Activated CD4-positive, alpha-beta memory T cell treated with anti-CD3 and anti-CD28 coated beads for 36 hours (primary cell): ENCODE measurements at regions of chr12 and their contacts with region 1.

Region 1: DNA sequence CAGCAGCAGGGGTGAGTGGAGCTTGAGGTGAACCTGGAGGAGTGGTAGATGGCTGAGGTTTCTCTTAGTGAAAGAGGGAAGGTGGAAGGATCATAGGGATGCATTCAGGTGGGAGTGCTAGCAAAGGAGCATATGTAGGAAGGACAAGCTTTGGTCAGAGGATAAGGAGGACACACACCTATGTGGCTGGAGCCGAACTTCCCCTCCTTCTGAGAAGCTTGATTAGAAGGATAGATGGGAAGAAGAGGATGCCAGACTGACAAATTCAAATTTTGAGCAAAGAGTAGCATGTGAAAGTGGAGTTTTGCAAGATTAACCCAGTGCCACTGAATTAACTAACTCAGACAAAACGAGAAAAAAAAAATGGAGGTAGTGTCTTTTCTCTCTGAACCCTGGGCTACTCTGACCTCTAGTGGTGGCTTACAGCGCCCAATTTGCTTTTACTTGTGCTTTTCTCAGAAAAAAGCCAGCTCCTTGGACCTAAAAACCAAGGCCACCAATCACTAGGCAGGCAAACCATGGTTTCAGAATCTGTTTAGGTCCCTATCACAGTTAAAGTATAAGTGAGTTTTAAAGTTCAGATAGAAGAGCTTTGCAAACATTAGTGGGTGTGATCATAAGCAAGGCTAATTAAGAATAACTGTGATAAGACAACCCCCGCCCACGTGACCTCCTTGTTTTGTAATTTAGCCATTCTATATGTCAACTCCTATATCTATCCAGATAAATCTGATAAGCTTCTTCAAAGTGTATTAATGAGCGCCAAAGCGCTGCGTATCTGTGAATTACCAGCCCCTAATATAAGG is 15.5 kb downstream of the EMP1 start:
- DNase-seq: peak; percentile 81
- H3K4me3 Mint-ChIP-seq: peak overlapping the region; percentile 53
- H3K27ac Mint-ChIP-seq: peak overlapping the region; percentile 93
- H3K4me1 Mint-ChIP-seq: peaks cover 54% of the 10 kb centered on the region
- H3K27me3 Mint-ChIP-seq: no peaks in the 10 kb centered on the region

Region 2: GRCh38 chr12:12803186-12803585 is 408.9 kb before region 1 on chr12:
- CTCF ChIA-PET with region 1: interaction called, 6 read pairs
- POLR2A ChIA-PET with region 1: no interaction called
- intact Hi-C with region 1: loop called (anchors 1 kb)
- DNase-seq: peak; percentile 61
- H3K4me3 Mint-ChIP-seq: no peak overlapping the region
- H3K27ac Mint-ChIP-seq: peak overlapping the region; percentile 50
- H3K4me1 Mint-ChIP-seq: peaks cover 46% of the 10 kb centered on the region
- H3K27me3 Mint-ChIP-seq: no peaks in the 10 kb centered on the region

Region 3: GRCh38 chr12:12819671-12820311 is 392.3 kb before region 1 on chr12:
- CTCF ChIA-PET with region 1: no interaction called
- POLR2A ChIA-PET with region 1: no interaction called
- intact Hi-C with region 1: no loop called
- DNase-seq: no peak
- H3K4me3 Mint-ChIP-seq: no peak overlapping the region
- H3K27ac Mint-ChIP-seq: peak overlapping the region; percentile 44
- H3K4me1 Mint-ChIP-seq: peaks cover 56% of the 10 kb centered on the region
- H3K27me3 Mint-ChIP-seq: no peaks in the 10 kb centered on the region

Region 4: DNA sequence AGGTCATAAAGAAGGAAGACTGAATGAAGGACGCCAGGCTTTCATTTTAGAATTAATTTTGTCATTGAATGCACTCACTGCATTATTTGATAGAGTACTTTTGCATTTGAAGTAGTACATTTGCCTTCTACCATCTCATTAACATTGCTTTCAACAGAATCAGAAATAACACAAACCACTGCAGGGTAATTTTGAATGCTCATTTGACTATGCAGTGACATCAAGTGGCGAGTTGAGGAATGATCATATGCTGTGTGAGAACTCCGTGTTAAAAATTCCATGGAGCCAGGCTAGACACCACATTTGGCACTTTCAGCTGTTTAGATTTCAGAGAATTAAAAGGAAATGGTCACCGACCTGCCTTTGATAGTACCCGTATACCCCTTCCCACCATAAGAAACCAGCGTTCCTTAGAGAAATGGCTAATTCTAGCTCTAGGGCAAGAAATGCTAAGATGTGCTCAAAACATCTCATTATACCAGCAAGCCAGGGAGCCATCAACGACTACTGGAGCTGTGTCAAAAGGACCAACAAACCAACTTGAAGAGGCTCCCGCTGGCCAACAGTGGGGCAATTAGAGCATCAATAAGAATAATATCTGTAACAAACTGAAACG is 228.5 kb before region 1 on chr12:
- CTCF ChIA-PET with region 1: interaction called, 26 read pairs
- POLR2A ChIA-PET with region 1: no interaction called
- intact Hi-C with region 1: loop called (anchors 2 kb)
- DNase-seq: no peak
- H3K4me3 Mint-ChIP-seq: no peak overlapping the region
- H3K27ac Mint-ChIP-seq: no peak overlapping the region
- H3K4me1 Mint-ChIP-seq: peaks cover 2% of the 10 kb centered on the region
- H3K27me3 Mint-ChIP-seq: no peaks in the 10 kb centered on the region

Region 5: GRCh38 chr12:13100882-13101769 is 110.9 kb before region 1 on chr12:
- CTCF ChIA-PET with region 1: interaction called, 173 read pairs
- POLR2A ChIA-PET with region 1: interaction called, 27 read pairs
- intact Hi-C with region 1: loop called (anchors 1 kb)
- DNase-seq: peak; percentile 93
- H3K4me3 Mint-ChIP-seq: peak overlapping the region; percentile 61
- H3K27ac Mint-ChIP-seq: peak overlapping the region; percentile 83
- H3K4me1 Mint-ChIP-seq: peaks cover 57% of the 10 kb centered on the region
- H3K27me3 Mint-ChIP-seq: no peaks in the 10 kb centered on the region

Region 6: DNA sequence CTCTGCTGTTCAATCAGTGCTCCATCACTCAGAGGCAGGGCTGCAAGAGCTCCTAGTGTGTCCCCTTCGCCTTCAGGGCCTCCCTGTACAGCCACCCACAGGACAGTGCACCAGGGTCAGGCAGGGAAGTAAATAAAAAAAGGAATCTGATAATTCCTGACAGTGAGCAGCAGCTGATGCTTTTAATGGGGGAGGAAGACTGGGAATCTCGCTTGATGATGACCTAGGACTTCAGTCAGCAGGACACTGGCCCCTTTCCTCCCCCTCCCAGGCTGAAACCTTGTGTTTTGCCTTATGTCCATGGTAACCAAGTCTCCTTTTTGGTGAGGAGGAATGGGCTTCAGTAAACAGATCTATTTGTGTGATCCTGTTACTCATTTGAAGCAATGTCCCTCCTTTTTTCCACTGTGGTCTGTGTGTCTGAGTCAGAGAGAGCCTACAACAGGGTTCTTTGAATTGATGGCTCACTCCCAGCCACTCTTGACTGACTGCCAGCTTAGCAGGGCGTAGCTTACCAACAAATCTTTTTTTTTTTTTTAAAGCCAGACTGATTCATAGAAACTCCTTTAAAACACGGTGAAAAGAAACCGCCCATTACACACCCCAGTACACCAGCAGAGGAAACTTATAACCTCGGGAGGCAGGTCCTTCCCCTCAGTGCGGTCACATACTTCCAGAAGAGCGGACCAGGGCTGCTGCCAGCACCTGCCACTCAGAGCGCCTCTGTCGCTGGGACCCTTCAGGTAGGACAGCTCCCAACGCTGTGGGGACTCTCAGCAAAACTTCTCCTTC is 15.7 kb before region 1 on chr12 and contains the start of gene EMP1:
- CTCF ChIA-PET with region 1: interaction called, 39 read pairs
- POLR2A ChIA-PET with region 1: interaction called, 11 read pairs
- intact Hi-C with region 1: loop called (anchors 1 kb)
- DNase-seq: peak; percentile 89
- H3K4me3 Mint-ChIP-seq: peak within 1 kb of the TSS; percentile 83
- H3K27ac Mint-ChIP-seq: peak within 1 kb of the TSS; percentile 79
- H3K4me1 Mint-ChIP-seq: peaks cover 29% of the 10 kb centered on the region
- H3K27me3 Mint-ChIP-seq: peaks cover 4% of the 10 kb centered on the region
- total RNA-seq, gene EMP1: 54.4 to 57.3 TPM

Region 7: GRCh38 chr12:13278249-13278787 is 66.3 kb after region 1 on chr12:
- CTCF ChIA-PET with region 1: no interaction called
- POLR2A ChIA-PET with region 1: no interaction called
- intact Hi-C with region 1: no loop called
- DNase-seq: peak; percentile 70
- H3K4me3 Mint-ChIP-seq: no peak overlapping the region
- H3K27ac Mint-ChIP-seq: no peak overlapping the region
- H3K4me1 Mint-ChIP-seq: peaks cover 2% of the 10 kb centered on the region
- H3K27me3 Mint-ChIP-seq: peaks cover 33% of the 10 kb centered on the region

Region 8: GRCh38 chr12:13347241-13348043 is 135.4 kb after region 1 on chr12:
- CTCF ChIA-PET with region 1: interaction called, 3 read pairs
- POLR2A ChIA-PET with region 1: no interaction called
- intact Hi-C with region 1: loop called (anchors 1 kb)
- DNase-seq: peak; percentile 76
- H3K4me3 Mint-ChIP-seq: no peak overlapping the region
- H3K27ac Mint-ChIP-seq: peak overlapping the region; percentile 18
- H3K4me1 Mint-ChIP-seq: peaks cover 11% of the 10 kb centered on the region
- H3K27me3 Mint-ChIP-seq: peaks cover 33% of the 10 kb centered on the region